AG04449 (cell line): ENCODE measurements at regions of chr1 and their contacts with region 1.

Region 1: DNA sequence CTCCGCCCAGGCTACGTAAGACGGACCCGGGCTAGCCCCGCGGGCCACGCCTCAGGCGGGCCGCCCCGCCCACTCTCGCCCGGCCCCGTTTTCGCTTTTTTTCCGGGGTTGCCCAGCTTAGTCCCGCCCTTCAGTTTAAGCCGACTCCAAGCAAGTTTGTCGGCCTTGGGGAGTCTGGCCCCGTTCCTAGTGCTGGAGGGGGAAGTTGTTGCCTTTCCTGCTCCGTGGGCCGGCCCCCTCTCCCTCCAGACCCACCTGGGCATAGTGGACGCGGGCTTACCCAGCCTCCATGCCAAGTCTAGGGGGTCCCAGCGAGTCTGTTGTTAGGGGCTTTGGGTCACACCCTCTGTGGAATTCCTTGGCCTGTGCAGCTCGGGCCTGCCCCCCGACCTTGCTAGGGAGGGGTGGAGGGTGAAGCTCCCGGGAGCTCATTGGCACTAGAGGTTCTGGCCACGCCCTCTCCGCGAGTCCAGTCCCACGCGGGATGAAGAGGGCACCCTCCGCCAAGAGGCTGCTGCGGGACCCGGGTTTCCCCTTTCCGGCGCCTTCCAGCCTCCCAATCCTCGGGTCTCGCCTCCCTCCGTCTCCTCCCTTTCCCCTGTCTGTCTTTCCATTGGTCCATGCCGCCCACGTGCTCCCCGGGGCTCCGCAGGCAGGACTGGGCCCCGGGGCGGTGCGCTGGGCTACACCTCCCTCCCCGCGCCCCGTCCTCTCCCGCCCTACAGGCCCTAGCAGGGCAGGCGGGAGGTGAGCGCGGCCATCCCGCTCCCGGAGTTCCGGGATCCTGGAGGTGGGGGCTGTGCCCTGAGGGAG is 3.3 kb downstream of the RUSC1 start:
- DNase-seq: peak; percentile 70
- H3K4me3 ChIP-seq: peak overlapping the region; percentile 84
- CTCF ChIP-seq: no peak

Region 2: GRCh38 chr1:155308493-155309422 is 15.2 kb before region 1 on chr1 and contains the start of gene FDPS:
- CTCF ChIA-PET with region 1: interaction called, 37 read pairs
- POLR2A ChIA-PET with region 1: interaction called, 9 read pairs
- DNase-seq: peak; percentile 94
- H3K4me3 ChIP-seq: peak within 1 kb of the TSS; percentile 84
- CTCF ChIP-seq: no peak

Region 3: DNA sequence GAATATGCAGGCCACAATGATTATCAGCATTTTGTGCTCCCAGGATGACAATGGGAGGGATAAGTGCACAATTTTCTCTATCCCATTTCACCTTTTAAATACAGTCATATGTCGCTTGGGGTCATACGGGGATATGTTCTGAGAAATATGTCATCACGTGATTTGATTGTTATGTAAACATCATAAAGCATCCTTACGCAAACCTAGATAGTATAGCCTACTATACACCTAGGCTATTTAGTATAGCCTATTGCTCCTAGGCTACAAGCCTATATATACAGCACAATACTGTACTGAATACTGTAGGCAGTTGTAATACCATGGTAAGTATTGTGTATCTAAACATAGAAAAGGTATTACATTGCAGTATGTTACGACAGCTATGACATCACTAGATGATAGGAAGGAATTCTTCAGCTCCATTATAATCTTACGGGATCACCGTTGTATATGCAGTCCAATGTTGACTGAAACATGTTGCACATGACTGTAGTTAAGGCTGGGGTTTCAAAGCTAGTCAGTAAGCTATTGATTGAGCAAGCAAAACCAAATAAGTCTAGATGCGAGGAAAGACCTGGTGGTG is 15.6 kb after region 1 on chr1:
- CTCF ChIA-PET with region 1: interaction called, 10 read pairs
- POLR2A ChIA-PET with region 1: no interaction called
- DNase-seq: no peak
- H3K4me3 ChIP-seq: no peak overlapping the region
- CTCF ChIP-seq: no peak